GM10248 (cell line): ENCODE measurements at regions of chr6 and their contacts with region 1.

Region 1: GRCh38 chr6:42726485-42727086 is 4.2 kb upstream of the PRPH2 start:
- DNase-seq: peak; percentile 85
- CTCF ChIP-seq: peak; percentile 79

Region 2: DNA sequence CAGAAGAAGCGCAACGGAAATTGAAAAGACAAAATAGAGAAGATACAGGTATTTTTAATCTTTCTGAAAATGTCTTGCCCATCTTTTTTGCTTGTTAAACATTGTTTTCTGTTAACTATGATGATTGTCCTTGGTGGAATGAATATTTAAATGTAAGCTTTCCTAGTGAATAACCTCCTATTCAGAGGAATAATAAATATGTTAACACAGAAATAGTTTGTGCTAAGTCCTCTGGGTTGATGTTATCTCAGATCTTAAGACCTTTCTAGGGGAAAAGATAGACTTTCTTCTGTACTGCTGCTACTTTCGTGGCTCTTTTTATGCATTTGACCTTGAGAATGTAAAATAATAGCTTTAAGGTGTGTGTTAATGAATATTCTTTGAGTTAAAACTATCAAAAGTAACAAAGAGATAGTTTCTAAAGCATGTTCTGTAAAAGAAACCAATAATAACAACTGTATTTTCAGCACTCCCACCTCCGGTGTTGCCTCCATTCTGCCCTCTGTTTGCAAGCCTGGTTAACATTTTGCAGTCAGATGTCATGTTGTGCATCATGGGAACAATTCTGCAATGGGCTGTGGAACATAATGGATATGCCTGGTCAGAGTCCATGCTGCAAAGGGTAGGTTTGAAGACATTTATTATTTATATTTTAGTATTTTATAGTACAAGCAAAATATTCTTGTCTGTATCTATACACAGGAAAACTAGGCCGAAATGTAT is 74.4 kb before region 1 on chr6:
- CTCF ChIA-PET with region 1: interaction called, 11 read pairs
- POLR2A ChIA-PET with region 1: no interaction called
- DNase-seq: no peak
- CTCF ChIP-seq: no peak

Region 3: DNA sequence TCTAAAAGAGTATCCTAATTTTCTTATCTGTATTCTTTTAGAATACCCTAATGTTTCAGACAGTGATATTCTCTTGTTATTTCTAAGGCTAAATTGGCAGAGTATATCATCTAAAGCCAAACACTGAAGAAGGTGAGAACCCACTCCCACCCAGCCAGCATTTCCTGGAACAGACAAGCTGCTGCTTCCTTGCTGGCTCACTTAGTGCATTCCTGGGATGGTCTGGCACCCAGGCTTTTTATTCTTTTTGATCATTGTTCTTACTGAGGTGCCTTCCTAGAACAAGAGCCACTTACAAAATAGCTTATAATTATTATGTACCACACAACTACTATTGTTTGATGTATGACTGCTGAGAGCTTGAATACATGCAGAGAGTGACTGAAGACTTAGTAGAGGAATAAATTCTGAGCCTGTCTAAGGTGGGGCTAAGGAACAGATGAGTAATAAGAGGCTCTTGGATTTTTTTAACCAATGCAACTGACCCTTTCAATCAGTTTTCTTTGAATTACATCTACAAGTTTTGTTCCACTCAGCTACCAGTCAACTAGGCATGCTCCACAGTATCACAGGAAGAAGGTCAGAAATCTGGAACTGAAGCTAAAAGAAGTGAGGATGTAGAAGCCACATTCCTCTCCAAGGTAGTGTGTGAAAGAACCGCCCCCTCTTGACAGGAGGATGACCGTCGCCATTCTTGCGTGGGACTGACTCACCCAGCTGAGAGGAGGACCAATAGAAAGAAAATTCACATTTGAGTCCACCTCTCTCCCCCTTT is 34.3 kb before region 1 on chr6:
- CTCF ChIA-PET with region 1: interaction called, 15 read pairs
- POLR2A ChIA-PET with region 1: no interaction called
- DNase-seq: no peak
- CTCF ChIP-seq: no peak

Region 4: GRCh38 chr6:42714098-42714761 is 12.4 kb before region 1 on chr6:
- CTCF ChIA-PET with region 1: interaction called, 20 read pairs
- POLR2A ChIA-PET with region 1: no interaction called
- DNase-seq: no peak
- CTCF ChIP-seq: no peak

Region 5: GRCh38 chr6:42771741-42772100 is 45.1 kb after region 1 on chr6:
- CTCF ChIA-PET with region 1: interaction called, 14 read pairs
- POLR2A ChIA-PET with region 1: no interaction called
- DNase-seq: no peak
- CTCF ChIP-seq: no peak

Region 6: DNA sequence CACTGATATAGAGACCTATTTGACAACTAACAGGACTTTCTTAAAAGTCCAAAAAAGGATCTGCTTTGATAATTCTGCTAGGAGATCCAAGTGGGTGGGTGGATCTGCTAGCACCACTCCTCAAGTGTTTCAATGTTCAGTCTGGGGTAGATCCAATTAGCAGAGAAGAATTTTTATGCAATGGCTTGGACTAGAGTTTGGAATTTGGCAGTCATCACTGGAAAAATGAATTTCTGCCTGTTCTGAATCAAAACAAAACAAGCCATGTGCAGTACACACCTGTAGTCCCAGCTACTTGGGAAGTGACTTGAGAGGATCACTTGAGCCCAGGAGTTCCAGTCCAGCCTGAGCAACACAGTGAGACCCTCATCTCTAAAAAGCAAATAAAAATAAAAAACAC is 221.4 kb after region 1 on chr6:
- CTCF ChIA-PET with region 1: no interaction called
- POLR2A ChIA-PET with region 1: no interaction called
- DNase-seq: no peak
- CTCF ChIP-seq: no peak